ENCODE measurements at regions of chr6 and their contacts with region 1.

Region 1: GRCh38 chr6:29737707-29738630 is 14.7 kb downstream of the HLA-F start:
- DNase-seq: peak; percentile 59
- CTCF ChIP-seq: peak; percentile 82

Region 2: DNA sequence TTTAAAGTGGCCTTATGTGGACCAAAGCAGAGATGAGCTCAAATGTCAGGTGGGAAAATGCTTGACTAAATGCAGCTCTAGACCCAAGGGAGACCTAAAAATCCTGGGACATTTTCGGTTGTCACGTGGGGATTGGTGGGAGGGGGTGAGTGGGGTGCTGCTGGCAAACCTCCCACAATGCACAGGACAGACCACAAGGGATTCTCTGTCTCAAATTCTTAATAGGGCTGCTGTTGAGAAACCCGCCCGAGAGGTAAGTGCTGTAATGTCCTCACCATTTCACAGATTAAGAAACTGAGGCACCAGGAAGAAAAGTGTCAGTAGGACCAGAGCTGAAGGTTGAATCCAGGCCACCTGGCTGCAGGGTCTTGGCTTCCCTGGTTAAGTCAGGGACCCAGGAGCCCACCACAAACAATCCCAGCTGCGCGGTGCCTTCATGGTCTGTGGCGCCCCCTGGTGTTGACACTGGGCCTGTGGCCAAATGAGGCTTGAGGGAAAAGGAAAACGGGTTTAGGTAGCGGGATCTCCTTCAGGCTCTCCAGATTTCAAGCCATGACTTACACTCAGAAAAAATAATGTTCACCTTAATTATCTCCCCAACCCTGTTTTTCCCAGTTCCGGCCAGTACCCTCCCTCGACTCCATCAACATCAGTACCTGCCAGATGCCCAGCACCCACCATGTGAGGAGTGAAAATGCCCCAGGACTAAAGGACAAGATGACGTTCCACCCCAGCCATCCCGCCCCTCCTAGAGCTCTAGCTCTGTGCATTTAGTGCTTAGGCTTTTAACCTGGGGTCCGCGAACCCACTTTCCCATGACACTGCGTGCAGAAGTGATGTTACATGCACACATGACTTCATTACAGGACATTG is 96.8 kb after region 1 on chr6:
- in situ Hi-C with region 1: loop called (anchors 10 kb)
- DNase-seq: no peak
- CTCF ChIP-seq: peak; percentile 70